ENCODE measurements at regions of chr13 and their contacts with region 1.

Region 1: GRCh38 chr13:79056706-79057105 is 349.3 kb downstream of the RBM26 start:
- DNase-seq: no peak
- ATAC-seq: peak; percentile 71
- H3K4me3 ChIP-seq: no peak overlapping the region
- H3K27ac ChIP-seq: no peak overlapping the region
- H3K4me1 ChIP-seq: no peaks in the 10 kb centered on the region
- H3K27me3 ChIP-seq: no peaks in the 10 kb centered on the region
- CTCF ChIP-seq: peak; percentile 18 to 58 (median 42); a peak in 3 of 6 replicates
- EP300 ChIP-seq: no peak
- POLR2A ChIP-seq: no peak
- RAD21 ChIP-seq: peak; percentile 15; the same call in 1 of the 2 replicates

Region 2: GRCh38 chr13:78658635-78659449 is 397.9 kb before region 1 on chr13 and contains the start of gene OBI1:
- CTCF ChIA-PET with region 1: interaction called, 3 read pairs
- POLR2A ChIA-PET with region 1: no interaction called
- RAD21 ChIA-PET with region 1: no interaction called
- SMC1A ChIA-PET with region 1: no interaction called
- in situ Hi-C with region 1: no loop called
- intact Hi-C with region 1: loop called (anchors 10 kb)
- DNase-seq: peak; percentile 40
- ATAC-seq: peak; percentile 94
- H3K4me3 ChIP-seq: peak within 1 kb of the TSS; percentile 76
- H3K27ac ChIP-seq: peak within 1 kb of the TSS; percentile 86
- H3K4me1 ChIP-seq: no peaks in the 10 kb centered on the region; the same call in 1 of the 2 replicates
- H3K27me3 ChIP-seq: no peaks in the 10 kb centered on the region
- CTCF ChIP-seq: no peak
- EP300 ChIP-seq: no peak
- POLR2A ChIP-seq: peak; percentile 98
- RAD21 ChIP-seq: no peak
- polyA plus RNA-seq, gene OBI1: 15.5 to 18.1 TPM

Region 3: DNA sequence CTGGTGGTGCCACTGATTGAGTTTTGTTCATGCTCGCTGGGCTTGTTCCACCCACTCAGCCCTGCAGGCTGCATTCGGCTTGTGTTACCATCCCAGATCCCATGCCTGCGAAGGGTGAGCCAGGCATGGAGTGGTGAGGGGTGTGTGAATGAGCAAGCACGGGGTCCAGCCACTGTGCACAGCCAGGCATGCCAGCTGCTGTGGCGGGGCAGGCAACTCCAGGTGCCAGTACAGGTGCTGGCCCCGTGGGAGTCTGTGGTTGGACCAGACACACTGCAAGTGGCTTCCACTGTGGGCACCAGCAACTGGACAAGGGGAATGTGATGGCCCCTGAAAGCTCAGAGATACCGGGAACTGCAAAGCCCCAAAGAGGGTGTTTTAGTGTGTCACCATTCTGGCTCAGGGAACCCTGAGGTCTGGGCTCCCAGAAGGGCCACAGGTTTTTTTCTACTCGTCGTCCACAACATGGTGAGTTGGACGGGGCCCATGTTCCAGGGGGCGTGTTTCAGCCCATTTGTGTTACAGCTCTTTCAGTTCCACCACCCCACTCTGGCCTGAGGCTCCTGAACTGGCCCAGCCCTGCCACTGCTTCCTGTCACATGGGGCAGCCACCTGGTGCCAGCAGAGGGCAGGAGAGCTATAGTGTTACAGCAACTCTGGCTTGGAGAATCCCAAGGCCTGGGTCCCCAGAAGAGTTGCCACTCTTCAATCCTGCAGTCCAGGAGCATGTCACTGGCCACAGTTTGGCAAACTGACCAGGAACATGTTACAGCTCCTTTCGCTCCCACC is 180.7 kb before region 1 on chr13:
- CTCF ChIA-PET with region 1: interaction called, 27 read pairs
- POLR2A ChIA-PET with region 1: no interaction called
- RAD21 ChIA-PET with region 1: interaction called, 32 read pairs
- SMC1A ChIA-PET with region 1: interaction called, 30 read pairs
- in situ Hi-C with region 1: no loop called
- intact Hi-C with region 1: loop called (anchors 2 kb)
- DNase-seq: no peak
- ATAC-seq: peak; percentile 97
- H3K4me3 ChIP-seq: no peak overlapping the region
- H3K27ac ChIP-seq: no peak overlapping the region
- H3K4me1 ChIP-seq: no peaks in the 10 kb centered on the region
- H3K27me3 ChIP-seq: no peaks in the 10 kb centered on the region
- CTCF ChIP-seq: peak in 2 of 3 experiments; percentile 25 to 38; a peak in 2 of 6 replicates
- EP300 ChIP-seq: no peak
- POLR2A ChIP-seq: no peak
- RAD21 ChIP-seq: peak; percentile 48

Region 4: GRCh38 chr13:79003989-79004898 is 52.5 kb before region 1 on chr13:
- CTCF ChIA-PET with region 1: interaction called, 6 read pairs
- POLR2A ChIA-PET with region 1: interaction called, 3 read pairs
- RAD21 ChIA-PET with region 1: interaction called, 10 read pairs
- SMC1A ChIA-PET with region 1: interaction called, 58 read pairs
- in situ Hi-C with region 1: no loop called
- intact Hi-C with region 1: no loop called
- DNase-seq: no peak
- ATAC-seq: peak; percentile 69
- H3K4me3 ChIP-seq: no peak overlapping the region
- H3K27ac ChIP-seq: no peak overlapping the region
- H3K4me1 ChIP-seq: no peaks in the 10 kb centered on the region
- H3K27me3 ChIP-seq: no peaks in the 10 kb centered on the region
- CTCF ChIP-seq: no peak
- EP300 ChIP-seq: peak; percentile 69 to 78; a peak in 2 of 4 replicates
- POLR2A ChIP-seq: no peak
- RAD21 ChIP-seq: no peak

Region 5: GRCh38 chr13:79043208-79043607 is 13.5 kb before region 1 on chr13:
- CTCF ChIA-PET with region 1: interaction called, 26 read pairs
- POLR2A ChIA-PET with region 1: no interaction called
- RAD21 ChIA-PET with region 1: interaction called, 3 read pairs
- SMC1A ChIA-PET with region 1: interaction called, 11 read pairs
- in situ Hi-C with region 1: no loop called
- intact Hi-C with region 1: no loop called
- DNase-seq: no peak
- ATAC-seq: no peak
- H3K4me3 ChIP-seq: no peak overlapping the region
- H3K27ac ChIP-seq: no peak overlapping the region
- H3K4me1 ChIP-seq: no peaks in the 10 kb centered on the region
- H3K27me3 ChIP-seq: no peaks in the 10 kb centered on the region
- CTCF ChIP-seq: no peak
- EP300 ChIP-seq: no peak
- POLR2A ChIP-seq: no peak
- RAD21 ChIP-seq: no peak